Transverse colon (tissue), 4 donors: ENCODE measurements at regions of chr9 and their contacts with region 1.

Region 1: DNA sequence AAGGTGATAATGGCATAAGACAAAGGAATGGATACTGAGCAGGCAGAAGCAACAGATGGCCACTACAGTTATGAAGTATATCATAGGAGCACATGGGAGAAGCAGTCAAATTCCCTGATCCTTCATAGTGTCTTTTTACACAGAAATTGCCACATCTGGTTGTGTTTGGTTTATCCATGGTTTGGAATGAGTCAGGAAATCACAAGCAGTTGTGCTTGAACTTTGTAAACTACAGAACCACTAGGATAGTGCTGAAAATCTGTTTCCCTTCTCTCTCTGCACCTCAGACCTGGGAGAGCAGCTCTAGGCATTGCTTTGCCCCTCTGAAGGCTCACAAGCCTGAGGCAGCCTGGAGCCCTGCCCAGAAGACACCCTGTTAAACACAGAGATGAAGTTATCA is 134.0 kb downstream of the DMRT2 start:
- DNase-seq: no peak
- H3K4me3 ChIP-seq: no peak overlapping the region
- H3K27ac ChIP-seq: no peak overlapping the region
- H3K4me1 ChIP-seq: no peaks in the 10 kb centered on the region
- H3K27me3 ChIP-seq: no peaks in the 10 kb centered on the region
- CTCF ChIP-seq: no peak
- EP300 ChIP-seq: no peak
- POLR2A ChIP-seq: no peak

Region 2: DNA sequence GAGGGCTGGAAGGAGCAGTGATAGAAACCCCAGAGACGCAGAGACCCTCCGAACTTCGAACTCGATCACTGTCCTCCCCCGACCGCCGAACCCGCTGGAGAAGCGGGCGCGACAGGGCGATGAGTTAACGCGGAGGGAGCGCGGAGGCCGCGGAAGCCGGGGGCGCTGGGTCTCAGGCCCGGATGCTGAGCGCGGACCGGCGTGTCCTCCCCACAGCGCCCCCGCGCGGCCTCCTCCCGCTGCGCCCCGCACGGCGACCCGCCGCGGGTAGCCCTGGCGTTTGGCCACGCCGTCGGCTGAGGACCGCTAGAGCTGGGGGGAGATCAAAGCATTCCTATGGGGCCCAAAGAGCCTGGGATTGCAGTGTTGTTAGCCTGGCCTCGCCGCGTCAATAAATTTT is 141.7 kb before region 1 on chr9:
- in situ Hi-C with region 1: no loop called
- intact Hi-C with region 1: no loop called
- DNase-seq: peak; percentile 34
- H3K4me3 ChIP-seq: peak overlapping the region in 2 of 4 donors; percentile 9 to 36
- H3K27ac ChIP-seq: no peak overlapping the region
- H3K4me1 ChIP-seq: peaks cover 4 to 22% (median 17%) of the 10 kb centered on the region in 4 donors
- H3K27me3 ChIP-seq: peaks cover 99% of the 10 kb centered on the region
- CTCF ChIP-seq: peak in 4 of 5 experiments; percentile 21 to 47 (median 40)
- EP300 ChIP-seq: no peak
- POLR2A ChIP-seq: no peak

Region 3: GRCh38 chr9:1065130-1065529 is 119.0 kb before region 1 on chr9:
- in situ Hi-C with region 1: no loop called
- intact Hi-C with region 1: no loop called
- DNase-seq: no peak
- H3K4me3 ChIP-seq: no peak overlapping the region
- H3K27ac ChIP-seq: no peak overlapping the region
- H3K4me1 ChIP-seq: no peaks in the 10 kb centered on the region
- H3K27me3 ChIP-seq: no peaks in the 10 kb centered on the region
- CTCF ChIP-seq: no peak
- EP300 ChIP-seq: no peak
- POLR2A ChIP-seq: no peak

Region 4: GRCh38 chr9:1115370-1115769 is 68.8 kb before region 1 on chr9:
- in situ Hi-C with region 1: no loop called
- intact Hi-C with region 1: loop called (anchors 10 kb)
- DNase-seq: no peak
- H3K4me3 ChIP-seq: no peak overlapping the region
- H3K27ac ChIP-seq: no peak overlapping the region
- H3K4me1 ChIP-seq: no peaks in the 10 kb centered on the region
- H3K27me3 ChIP-seq: no peaks in the 10 kb centered on the region
- CTCF ChIP-seq: no peak
- EP300 ChIP-seq: no peak
- POLR2A ChIP-seq: no peak

Region 5: DNA sequence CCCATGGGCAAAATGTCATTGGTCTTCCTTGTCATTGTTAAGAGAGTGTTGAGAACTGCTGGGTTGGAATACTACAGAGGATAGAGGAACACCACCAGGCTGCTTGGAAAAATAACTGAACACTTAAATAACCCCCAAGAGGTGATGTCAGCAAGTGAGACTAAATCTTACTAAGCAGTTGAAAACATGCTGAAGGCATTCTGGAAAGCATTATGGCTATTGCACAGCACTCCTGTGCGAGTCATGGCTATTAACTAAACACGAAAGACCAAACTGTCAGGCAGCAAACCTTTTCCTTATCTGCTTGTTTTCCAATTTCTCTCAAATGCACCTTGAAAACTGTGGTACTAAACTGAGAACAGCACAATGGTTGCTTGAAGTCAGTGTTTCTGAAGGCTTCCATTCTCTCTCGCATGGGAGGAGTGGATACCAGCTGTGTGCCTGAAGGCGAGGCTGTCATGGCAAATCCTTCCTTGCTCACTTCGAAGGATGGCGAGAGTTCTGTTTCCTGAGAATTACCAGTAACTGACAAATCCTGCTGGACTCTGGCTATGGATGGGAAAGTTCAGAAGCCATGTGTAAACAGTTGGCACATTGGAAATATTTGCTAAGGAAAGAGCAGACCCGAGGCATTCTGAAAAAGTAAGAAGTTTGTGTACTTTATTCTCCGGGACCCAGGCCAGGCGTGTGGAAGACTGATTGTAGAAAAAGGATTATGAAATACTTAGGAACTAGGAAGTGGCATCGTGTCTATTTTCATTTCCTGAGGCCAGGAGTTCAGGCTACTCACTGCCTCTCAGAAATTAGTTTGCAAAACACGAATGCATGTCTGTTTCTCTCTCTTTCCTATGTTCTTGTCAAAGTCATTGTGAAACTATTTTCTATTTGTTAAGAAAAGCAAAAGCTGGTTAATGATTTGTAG is 48.1 kb after region 1 on chr9:
- in situ Hi-C with region 1: no loop called
- intact Hi-C with region 1: no loop called
- DNase-seq: peak; percentile 31
- H3K4me3 ChIP-seq: no peak overlapping the region
- H3K27ac ChIP-seq: peak overlapping the region; percentile 27 to 65 (median 48)
- H3K4me1 ChIP-seq: peaks cover 0 to 11% (median 8%) of the 10 kb centered on the region in 4 donors
- H3K27me3 ChIP-seq: no peaks in the 10 kb centered on the region
- CTCF ChIP-seq: no peak
- EP300 ChIP-seq: no peak
- POLR2A ChIP-seq: no peak